ENCODE measurements at regions of chr16 and their contacts with region 1.

Region 1: DNA sequence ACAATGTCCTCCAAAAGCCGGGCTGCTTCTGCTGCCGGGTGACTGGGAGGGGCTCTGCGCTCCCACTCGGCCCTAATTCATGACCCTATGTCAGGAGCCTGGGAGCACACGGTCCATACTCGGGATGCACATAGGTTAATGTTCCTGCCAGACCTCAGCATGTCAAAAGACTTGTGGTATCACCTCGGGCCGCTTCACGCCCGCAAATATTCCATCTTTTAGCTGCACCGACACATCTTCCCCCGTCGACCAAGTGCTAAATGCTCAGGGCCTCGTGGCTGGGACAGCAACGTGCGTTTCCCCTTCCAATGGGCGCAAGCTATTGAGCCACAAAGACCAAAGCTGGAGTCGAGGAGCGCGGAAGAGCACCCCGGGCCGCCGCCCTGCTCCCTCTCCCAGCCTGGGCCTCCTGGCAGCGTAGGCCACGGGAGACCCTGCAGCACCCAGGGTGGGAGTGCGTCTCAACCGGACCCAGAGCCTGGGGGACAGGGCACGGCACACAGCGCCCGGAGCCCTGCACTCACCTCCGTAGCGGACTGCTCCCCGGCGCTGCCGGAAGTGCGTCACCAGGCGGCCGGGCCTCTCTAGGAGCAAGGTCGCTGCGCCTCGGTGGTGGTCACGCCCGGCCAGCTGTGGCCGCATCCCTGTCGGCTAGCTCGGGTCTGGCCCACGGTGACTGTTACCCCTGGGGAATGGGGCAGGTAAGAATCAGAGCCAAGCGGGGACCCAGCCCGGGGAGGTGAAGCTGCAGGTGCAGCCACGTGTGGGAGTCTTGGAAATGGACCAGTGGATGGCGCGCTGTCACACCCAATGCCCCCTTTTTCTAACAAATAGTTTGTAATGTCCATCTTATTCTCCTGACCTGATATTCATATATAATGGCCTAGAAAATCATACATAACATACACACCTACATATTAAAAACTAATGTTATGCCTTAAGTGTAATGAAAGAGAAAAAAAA is at the start of gene ZNF23:
- DNase-seq: peak; percentile 85 to 93
- ATAC-seq: peak; percentile 98 to 100
- H3K4me3 ChIP-seq: peak within 1 kb of the TSS; percentile 69
- H3K27ac ChIP-seq: peak within 1 kb of the TSS; percentile 75 to 93
- H3K4me1 ChIP-seq: 0 out of 3 replicates have a peak, but pooled peaks cover 7% of the 10 kb centered on the region
- CTCF ChIP-seq: no peak; the same call in 2 of the 3 replicates
- EP300 ChIP-seq: no peak
- POLR2A ChIP-seq: peak; percentile 96
- RAD21 ChIP-seq: no peak; a peak in 1 of 5 replicates
- polyA plus RNA-seq, gene ZNF23: 6.1 and 8.7 TPM in 2 replicates

Region 2: GRCh38 chr16:71426072-71426879 is 35.7 kb before region 1 on chr16:
- CTCF ChIA-PET with region 1: interaction called, 4 read pairs
- POLR2A ChIA-PET with region 1: interaction called, 18 read pairs
- DNase-seq: peak; percentile 97 to 98
- ATAC-seq: peak; percentile 94 to 97
- H3K4me3 ChIP-seq: peak overlapping the region; percentile 50
- H3K27ac ChIP-seq: peak overlapping the region; percentile 18 to 69; a peak in 2 of 6 replicates
- H3K4me1 ChIP-seq: peaks cover 5% of the 10 kb centered on the region; the same call in 1 of the 3 replicates
- CTCF ChIP-seq: no peak
- EP300 ChIP-seq: no peak
- POLR2A ChIP-seq: no peak
- RAD21 ChIP-seq: no peak

Region 3: DNA sequence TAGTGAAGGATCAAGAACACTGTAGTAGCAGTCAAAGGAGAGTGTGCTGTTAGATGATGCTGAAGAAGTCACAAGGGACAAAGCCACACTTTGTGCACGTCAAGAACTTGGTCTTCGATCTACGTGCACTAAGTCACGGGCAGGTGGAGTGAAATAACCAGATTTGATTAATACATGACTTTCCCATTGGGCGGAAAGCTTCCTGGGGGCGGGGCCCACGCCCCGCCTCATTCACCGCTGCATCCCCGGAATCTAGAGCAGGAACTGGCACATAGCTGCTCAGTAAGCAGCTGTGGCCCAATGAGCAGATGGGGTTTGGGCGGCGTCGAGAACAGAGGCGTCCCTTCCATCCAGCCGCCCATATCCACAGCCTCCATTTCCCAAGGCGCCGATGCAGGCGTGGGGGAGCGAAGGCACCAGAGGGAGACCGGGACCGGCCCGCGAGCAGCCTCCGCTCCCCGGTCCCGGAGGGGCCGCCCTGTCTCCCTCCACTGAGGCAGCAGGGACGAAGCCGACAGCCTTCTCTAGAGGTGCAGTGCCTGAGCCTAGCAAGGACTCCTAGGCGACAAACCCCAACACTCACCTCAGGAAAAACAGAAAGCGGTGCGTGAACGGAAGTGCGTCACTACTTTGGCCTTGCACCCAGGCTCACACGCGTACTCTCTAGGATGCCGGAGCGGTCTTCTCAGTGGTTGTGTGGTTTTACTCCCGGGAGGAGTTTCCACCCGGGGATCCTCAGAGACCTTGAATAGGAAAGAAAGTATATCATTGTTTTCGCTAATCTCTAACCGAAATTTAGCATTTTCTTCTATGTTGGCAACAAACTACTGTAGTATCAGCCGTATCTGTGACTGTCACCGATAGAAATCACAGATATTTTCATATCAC is 22.3 kb after region 1 on chr16:
- CTCF ChIA-PET with region 1: interaction called, 5 read pairs
- POLR2A ChIA-PET with region 1: interaction called, 23 read pairs
- DNase-seq: peak; percentile 84 to 95
- ATAC-seq: peak; percentile 97 to 98
- H3K4me3 ChIP-seq: peak overlapping the region; percentile 68
- H3K27ac ChIP-seq: peak overlapping the region; percentile 83 to 92
- H3K4me1 ChIP-seq: peaks cover 3% of the 10 kb centered on the region; the same call in 1 of the 3 replicates
- CTCF ChIP-seq: no peak
- EP300 ChIP-seq: no peak
- POLR2A ChIP-seq: peak; percentile 52
- RAD21 ChIP-seq: no peak

Measured in A549 (cell line).